ENCODE measurements at regions of chr20 and their contacts with region 1.

Region 1: DNA sequence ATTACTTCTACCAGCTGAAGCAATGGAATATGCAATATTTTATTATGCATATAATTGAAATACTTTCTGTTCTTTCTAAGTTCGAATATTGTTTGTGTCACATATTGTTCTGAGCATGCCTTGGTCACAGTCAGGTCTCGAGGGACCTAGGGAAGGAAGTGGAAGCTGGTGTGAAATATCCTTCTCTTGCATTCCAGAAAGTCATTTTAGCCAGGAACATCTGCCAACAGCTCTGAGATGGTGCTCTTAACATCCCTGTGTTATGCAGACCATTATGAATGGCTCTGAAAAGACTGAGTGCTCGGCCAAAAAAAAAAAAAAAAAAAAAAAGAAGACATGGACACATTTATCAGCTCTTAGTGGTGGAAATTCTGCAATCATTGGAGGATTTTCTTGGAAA is 132.7 kb upstream of the JAG1 start:
- DNase-seq: no peak
- ATAC-seq: peak; percentile 20; the same call in 1 of the 2 replicates
- H3K4me3 Mint-ChIP-seq: no peak overlapping the region
- H3K27ac Mint-ChIP-seq: 0 out of 2 replicates have a peak overlapping the region, but pooled peaks have one; percentile 20
- H3K4me1 Mint-ChIP-seq: peaks cover 13% of the 10 kb centered on the region
- H3K27me3 Mint-ChIP-seq: no peaks in the 10 kb centered on the region
- CTCF ChIP-seq: no peak

Region 2: DNA sequence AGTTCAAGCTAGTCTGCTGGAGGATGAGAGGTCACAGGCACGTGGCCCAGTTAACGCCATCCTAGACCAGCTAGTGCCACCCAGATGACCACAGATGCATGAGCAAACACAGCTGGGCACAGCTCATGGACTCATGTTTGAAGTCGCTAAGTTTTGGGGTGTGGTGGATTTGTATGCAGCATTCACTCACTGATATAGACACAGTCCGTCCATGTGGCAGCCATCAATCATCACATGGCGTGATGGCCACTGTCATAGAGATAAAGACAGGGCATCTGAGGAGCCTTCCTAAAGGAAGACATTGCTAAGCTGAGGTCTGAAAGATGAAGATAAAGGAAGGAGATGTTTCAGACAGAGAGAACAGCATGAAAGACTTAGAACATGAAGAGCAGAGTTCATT is 21.6 kb after region 1 on chr20:
- CTCF ChIA-PET with region 1: no interaction called
- POLR2A ChIA-PET with region 1: interaction called, 10 read pairs
- DNase-seq: no peak
- ATAC-seq: no peak
- H3K4me3 Mint-ChIP-seq: no peak overlapping the region
- H3K27ac Mint-ChIP-seq: no peak overlapping the region
- H3K4me1 Mint-ChIP-seq: no peaks in the 10 kb centered on the region
- H3K27me3 Mint-ChIP-seq: no peaks in the 10 kb centered on the region
- CTCF ChIP-seq: no peak